Panc1 (cell line): ENCODE measurements at regions of chr6 and their contacts with region 1.

Region 1: DNA sequence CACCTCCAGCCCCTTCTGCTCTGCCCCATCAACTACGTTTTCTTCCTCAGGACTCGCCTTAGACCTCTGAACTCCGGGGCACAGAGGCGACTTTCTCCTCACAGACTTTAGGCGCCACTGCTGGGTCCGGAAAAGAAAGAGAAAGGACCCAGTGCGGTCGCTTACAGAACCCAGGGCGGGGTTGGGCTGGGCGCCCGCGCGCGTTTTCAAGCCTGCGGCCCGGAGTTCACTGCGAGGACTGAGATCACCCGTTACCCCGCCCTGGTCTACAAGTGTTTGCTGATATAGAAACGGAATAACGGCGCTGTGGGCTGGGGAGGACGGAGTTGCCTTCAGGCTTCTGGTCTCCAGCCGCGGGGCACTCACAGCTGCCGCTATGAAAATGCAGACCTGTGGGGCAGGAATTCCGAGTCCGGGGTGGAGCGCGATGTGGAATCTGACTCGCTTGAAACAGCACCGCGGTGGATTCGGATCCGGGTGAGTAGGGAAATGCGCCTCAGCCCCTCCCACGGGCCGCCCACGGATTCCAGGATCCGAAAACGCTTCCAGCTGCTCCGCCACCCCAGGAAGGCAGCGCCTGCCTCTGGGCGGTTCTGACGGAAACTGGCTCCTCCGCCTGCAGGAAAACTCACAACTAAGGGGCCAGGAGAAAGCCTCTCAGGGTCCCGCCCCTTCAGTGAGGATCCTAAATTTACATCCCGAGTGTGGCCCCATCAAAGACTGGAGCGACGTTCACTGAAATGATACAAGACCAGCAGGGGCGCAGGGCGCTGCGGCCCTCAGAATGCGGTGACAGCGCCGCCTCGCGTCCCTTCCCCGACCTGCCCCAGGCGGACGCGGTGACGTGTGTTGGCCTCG is 29.4 kb downstream of the HLA-F start:
- DNase-seq: peak; percentile 73
- ATAC-seq: peak; percentile 88
- H3K4me3 ChIP-seq: peak overlapping the region; percentile 46 to 67
- H3K27ac ChIP-seq: no peak overlapping the region; the same call in 1 of the 2 replicates
- H3K4me1 ChIP-seq: peaks cover 4% of the 10 kb centered on the region; the same call in 1 of the 2 replicates
- H3K27me3 ChIP-seq: no peaks in the 10 kb centered on the region; the same call in none of the 2 replicates
- CTCF ChIP-seq: peak; percentile 99

Region 2: GRCh38 chr6:27940766-27941165 is 1811.9 kb before region 1 on chr6:
- CTCF ChIA-PET with region 1: interaction called, 11 read pairs
- POLR2A ChIA-PET with region 1: no interaction called
- in situ Hi-C with region 1: no loop called
- intact Hi-C with region 1: no loop called
- DNase-seq: no peak
- ATAC-seq: no peak
- H3K4me3 ChIP-seq: no peak overlapping the region
- H3K27ac ChIP-seq: no peak overlapping the region
- H3K4me1 ChIP-seq: no peaks in the 10 kb centered on the region
- H3K27me3 ChIP-seq: peaks cover 4% of the 10 kb centered on the region; the same call in 1 of the 2 replicates
- CTCF ChIP-seq: no peak

Region 3: GRCh38 chr6:29705389-29706231 is 47.1 kb before region 1 on chr6:
- CTCF ChIA-PET with region 1: interaction called, 6 read pairs
- POLR2A ChIA-PET with region 1: no interaction called
- in situ Hi-C with region 1: no loop called
- intact Hi-C with region 1: loop called (anchors 5 kb)
- DNase-seq: no peak
- ATAC-seq: peak; percentile 60; the same call in 1 of the 2 replicates
- H3K4me3 ChIP-seq: no peak overlapping the region
- H3K27ac ChIP-seq: no peak overlapping the region
- H3K4me1 ChIP-seq: no peaks in the 10 kb centered on the region
- H3K27me3 ChIP-seq: peaks cover 19% of the 10 kb centered on the region
- CTCF ChIP-seq: peak; percentile 67

Region 4: GRCh38 chr6:30013291-30013922 is 260.7 kb after region 1 on chr6:
- CTCF ChIA-PET with region 1: interaction called, 10 read pairs
- POLR2A ChIA-PET with region 1: no interaction called
- in situ Hi-C with region 1: no loop called
- intact Hi-C with region 1: no loop called
- DNase-seq: no peak
- ATAC-seq: peak; percentile 75; the same call in 1 of the 2 replicates
- H3K4me3 ChIP-seq: no peak overlapping the region
- H3K27ac ChIP-seq: no peak overlapping the region
- H3K4me1 ChIP-seq: no peaks in the 10 kb centered on the region
- H3K27me3 ChIP-seq: no peaks in the 10 kb centered on the region
- CTCF ChIP-seq: peak; percentile 76